Activated CD4-positive, alpha-beta T cell treated with anti-CD3 and anti-CD28 coated beads, Interleukin-2, amount 10 ng/mL, durations not matched to agents 24 days and 14 days (primary cell): ENCODE measurements at regions of chr1 and their contacts with region 1.

Region 1: GRCh38 chr1:7930645-7931445 is 9.8 kb downstream of the TNFRSF9 start:
- DNase-seq: no peak
- H3K4me3 Mint-ChIP-seq: peak overlapping the region; percentile 63
- H3K27ac Mint-ChIP-seq: peak overlapping the region; percentile 69
- H3K4me1 Mint-ChIP-seq: peaks cover 24% of the 10 kb centered on the region
- H3K27me3 Mint-ChIP-seq: peaks cover 2% of the 10 kb centered on the region

Region 2: DNA sequence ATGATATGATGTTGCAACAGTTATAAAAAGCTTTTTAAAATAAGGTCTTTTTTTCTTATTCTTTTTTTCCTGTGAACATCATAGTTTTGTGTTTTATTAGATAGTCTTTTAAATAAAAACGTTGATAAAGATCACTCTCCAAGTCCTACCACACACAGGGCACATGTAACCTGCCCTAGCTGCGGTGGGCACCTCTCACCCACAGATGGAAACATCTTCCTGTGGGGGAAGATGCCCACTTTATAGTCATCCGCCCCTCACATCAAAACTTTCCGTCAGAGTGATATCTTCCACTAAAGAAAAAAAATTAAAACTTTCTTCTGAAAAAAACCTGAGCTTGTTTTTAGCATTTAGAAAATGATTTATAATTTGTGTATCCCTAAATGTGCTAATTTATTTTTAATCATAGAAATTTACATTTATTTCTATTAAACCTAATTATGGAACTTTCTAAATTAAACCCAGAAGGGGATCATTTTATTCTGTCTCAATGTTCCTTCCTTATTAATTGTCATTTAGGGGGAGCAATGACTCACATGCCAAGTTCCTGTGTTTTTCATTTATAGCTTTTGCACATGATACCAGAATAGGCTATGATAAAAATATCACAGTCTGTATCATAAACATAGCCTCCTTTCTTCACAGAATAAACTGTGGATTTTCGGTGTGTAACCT is 14.9 kb before region 1 on chr1:
- intact Hi-C with region 1: loop called (anchors 2 kb)
- DNase-seq: no peak
- H3K4me3 Mint-ChIP-seq: no peak overlapping the region
- H3K27ac Mint-ChIP-seq: peak overlapping the region; percentile 84
- H3K4me1 Mint-ChIP-seq: peaks cover 26% of the 10 kb centered on the region
- H3K27me3 Mint-ChIP-seq: no peaks in the 10 kb centered on the region

Region 3: DNA sequence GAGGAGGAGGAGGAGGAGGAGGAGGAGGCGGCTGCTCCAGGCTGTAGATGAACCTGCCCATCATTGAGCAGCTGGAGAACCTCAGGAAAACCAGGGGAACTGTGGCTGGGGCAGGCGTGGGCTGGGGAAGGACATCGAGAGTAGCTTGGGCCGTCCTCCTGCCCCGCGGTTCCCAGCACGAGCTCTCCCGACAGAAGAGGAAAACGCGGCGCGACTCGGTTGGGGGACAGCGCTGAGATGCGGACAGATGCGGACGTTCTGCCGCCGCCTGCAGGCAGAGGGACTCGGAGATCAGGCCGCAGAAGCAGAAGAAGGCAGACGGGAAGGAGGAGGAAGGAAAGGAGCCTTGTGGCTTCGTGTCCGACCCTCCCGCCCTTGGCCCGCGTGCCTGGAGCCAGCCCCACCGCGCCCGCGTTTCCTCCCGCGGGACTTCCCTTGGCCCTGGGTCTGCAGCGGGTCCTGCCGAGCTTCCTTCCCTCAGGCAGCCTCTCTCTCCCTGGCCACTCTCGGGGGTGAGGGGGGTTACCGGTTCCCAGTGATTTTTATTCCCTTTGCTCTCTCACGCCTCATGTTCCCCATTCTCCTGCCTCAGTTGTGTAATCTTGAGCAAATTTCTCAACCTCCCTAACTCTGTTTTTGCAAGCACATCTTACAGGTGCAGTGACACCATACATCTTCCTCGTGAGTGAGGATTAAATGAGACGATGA is 11.5 kb after region 1 on chr1:
- intact Hi-C with region 1: loop called (anchors 1 kb)
- DNase-seq: peak; percentile 76
- H3K4me3 Mint-ChIP-seq: peak overlapping the region; percentile 78
- H3K27ac Mint-ChIP-seq: peak overlapping the region; percentile 65
- H3K4me1 Mint-ChIP-seq: peaks cover 46% of the 10 kb centered on the region
- H3K27me3 Mint-ChIP-seq: peaks cover 19% of the 10 kb centered on the region

Region 4: DNA sequence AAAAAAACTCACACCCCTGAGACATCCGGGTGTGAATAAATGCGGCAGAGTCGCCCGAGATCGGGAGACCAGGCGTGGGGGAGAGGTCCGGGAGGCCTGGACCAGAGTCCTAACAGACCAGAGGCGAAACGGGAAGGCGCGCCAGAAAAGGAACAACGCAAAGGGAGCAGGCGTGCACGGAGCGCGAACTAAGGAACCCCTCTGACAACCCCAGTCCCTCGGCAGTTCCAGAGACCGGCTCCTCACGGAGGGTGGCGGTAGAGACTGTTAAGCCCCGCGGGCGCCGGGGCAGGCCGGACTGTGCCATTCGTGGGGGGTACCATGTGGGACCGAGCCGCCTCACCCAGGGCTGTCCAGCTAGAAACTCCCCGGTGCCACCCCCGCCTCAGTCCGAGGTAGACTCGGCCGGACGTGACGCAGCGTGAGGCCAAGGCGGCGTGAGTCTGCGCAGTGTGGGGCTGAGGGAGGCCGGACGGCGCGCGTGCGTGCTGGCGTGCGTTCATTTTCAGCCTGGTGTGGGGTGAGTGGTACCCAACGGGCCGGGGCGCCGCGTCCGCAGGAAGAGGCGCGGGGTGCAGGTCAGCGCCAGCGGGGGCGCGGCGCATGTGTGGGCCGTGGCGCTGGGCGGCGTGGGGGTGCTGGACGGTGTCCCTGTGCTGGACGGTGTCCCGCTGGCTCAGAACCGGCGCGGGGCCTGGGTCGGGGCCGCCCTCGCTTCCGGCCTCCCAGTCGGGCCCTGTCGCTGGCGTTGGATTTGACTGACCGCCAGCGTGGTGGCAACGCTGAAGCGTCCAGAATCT is 30.6 kb after region 1 on chr1 and contains the start of gene PARK7:
- intact Hi-C with region 1: no loop called
- DNase-seq: peak; percentile 100
- H3K4me3 Mint-ChIP-seq: peak within 1 kb of the TSS; percentile 99
- H3K27ac Mint-ChIP-seq: peak within 1 kb of the TSS; percentile 100
- H3K4me1 Mint-ChIP-seq: peaks cover 45% of the 10 kb centered on the region
- H3K27me3 Mint-ChIP-seq: no peaks in the 10 kb centered on the region
- total RNA-seq, gene PARK7: 409 and 426 TPM in 2 replicates

Region 5: GRCh38 chr1:7972285-7972684 is 41.4 kb after region 1 on chr1:
- intact Hi-C with region 1: no loop called
- DNase-seq: no peak
- H3K4me3 Mint-ChIP-seq: no peak overlapping the region
- H3K27ac Mint-ChIP-seq: no peak overlapping the region
- H3K4me1 Mint-ChIP-seq: peaks cover 1% of the 10 kb centered on the region
- H3K27me3 Mint-ChIP-seq: no peaks in the 10 kb centered on the region